GM13977 (cell line): ENCODE measurements at regions of chr19 and their contacts with region 1.

Region 1: GRCh38 chr19:3660493-3661219 is 34.1 kb upstream of the CACTIN start:
- DNase-seq: no peak
- CTCF ChIP-seq: no peak

Region 2: DNA sequence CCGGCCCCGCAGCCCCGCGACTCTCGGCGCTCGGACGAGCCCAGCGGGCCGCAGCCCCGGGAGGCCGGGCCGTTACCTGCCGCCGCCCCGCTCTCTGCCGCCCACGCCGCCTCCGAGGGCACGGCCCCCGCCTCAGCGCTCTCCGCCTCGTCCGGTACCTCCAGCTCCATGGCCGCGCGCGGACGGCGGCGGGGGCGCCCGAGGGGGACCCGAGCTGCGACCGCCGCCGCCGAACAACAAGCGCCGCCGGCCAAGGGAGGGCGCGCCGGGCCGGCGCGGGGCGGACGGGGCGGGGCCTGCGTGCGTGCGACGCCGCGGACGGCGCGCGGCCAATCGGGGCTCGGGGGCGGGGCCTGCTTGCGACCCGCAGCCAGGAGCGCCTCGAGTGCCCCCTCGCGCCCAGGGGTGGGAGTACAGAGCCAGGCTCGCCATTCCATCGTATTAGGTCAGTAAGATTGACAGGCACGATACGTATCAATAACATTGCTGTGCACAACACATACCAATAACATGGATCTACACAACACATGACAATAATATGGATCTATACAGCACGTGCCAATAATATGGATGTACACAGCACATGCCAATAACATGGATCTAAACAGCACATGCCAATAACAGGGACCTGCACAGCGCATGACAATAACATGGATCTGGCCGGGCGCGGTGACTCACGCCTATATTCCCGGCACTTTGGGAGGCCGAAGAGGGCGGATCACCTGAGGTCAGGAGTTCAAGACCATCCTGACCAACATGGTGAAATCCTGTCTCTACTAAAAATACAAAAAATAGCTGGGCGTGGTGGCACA is 39.8 kb after region 1 on chr19 and contains the start of gene PIP5K1C:
- in situ Hi-C with region 1: loop called (anchors 5 kb)
- DNase-seq: peak; percentile 99
- CTCF ChIP-seq: peak; percentile 85